Activated CD4-positive, alpha-beta T cell treated with anti-CD3 and anti-CD28 coated beads, Interleukin-2, amount 10 ng/mL, durations not matched to agents 24 days and 14 days (primary cell): ENCODE measurements at regions of chr9 and their contacts with region 1.

Region 1: DNA sequence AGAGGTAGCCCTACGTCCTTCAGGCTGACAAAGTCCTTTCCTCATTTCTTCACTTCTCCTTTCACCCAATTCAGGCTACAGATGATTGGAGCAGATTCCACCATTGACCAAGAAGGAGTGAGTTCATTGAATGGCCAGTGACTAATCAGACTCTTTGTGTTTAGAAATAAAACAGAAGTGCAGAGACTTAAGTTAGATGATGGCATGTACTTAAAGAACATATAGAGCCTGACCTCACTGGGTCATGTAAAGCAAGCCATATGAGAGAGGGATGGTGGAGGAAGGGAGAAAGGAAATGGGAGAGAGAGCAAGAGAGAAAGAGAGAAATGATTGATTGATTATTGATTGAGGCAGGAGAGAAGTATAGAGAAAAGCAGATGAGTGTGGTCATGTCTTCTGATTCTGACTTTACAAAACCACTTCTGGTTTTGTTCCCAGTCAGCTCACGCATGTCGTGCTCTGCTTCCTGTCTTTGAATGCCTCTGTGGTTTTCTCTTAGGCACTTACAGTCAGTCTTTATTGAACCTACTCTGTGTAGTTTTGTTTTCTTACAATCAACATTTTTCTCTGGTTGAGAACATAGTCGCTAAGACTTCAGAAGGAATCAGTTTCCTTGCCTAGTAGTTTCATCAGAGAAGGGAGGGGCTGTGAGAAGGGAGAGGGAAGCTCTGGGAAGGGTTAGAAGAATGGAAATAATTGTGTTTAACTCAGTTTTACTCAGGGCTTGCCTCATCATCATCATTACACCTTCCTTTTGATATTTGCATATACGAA is 149.2 kb upstream of the KLF9 start:
- DNase-seq: peak; percentile 90
- H3K4me3 Mint-ChIP-seq: peak overlapping the region; percentile 60
- H3K27ac Mint-ChIP-seq: peak overlapping the region; percentile 95
- H3K4me1 Mint-ChIP-seq: peaks cover 47% of the 10 kb centered on the region
- H3K27me3 Mint-ChIP-seq: no peaks in the 10 kb centered on the region

Region 2: DNA sequence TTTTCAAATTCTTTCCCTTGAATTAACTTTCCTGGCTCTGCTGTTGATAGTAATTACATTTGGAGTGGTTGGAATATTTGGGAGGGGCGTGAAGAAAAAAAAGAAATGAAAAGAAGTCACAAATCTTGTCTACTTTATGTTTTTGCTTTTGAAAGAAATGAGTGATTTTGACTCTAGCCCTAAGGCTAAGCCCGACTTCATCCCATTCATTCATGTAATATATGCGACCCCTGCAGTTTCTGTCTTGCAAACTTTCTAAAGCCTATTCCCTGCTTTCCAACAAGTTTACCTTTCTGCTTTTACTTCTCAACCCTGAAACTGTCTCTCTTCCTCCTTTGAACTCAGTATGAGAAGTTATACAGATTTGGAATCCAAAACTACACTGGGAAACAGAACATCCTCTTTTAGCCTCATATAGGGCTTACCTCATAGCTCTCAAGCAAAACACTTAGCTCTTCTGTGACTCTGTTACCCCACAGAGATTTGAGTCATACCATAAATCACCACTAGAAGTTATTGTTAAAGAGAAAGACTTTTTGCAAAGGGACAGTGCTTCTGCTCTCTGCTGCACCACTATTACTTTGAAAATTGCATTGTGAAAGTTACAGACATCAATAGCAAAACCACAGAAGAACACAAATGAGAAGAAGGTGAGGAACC is 741.4 kb before region 1 on chr9:
- intact Hi-C with region 1: loop called (anchors 10 kb)
- DNase-seq: peak; percentile 54
- H3K4me3 Mint-ChIP-seq: no peak overlapping the region
- H3K27ac Mint-ChIP-seq: no peak overlapping the region
- H3K4me1 Mint-ChIP-seq: peaks cover 40% of the 10 kb centered on the region
- H3K27me3 Mint-ChIP-seq: peaks cover 17% of the 10 kb centered on the region

Region 3: DNA sequence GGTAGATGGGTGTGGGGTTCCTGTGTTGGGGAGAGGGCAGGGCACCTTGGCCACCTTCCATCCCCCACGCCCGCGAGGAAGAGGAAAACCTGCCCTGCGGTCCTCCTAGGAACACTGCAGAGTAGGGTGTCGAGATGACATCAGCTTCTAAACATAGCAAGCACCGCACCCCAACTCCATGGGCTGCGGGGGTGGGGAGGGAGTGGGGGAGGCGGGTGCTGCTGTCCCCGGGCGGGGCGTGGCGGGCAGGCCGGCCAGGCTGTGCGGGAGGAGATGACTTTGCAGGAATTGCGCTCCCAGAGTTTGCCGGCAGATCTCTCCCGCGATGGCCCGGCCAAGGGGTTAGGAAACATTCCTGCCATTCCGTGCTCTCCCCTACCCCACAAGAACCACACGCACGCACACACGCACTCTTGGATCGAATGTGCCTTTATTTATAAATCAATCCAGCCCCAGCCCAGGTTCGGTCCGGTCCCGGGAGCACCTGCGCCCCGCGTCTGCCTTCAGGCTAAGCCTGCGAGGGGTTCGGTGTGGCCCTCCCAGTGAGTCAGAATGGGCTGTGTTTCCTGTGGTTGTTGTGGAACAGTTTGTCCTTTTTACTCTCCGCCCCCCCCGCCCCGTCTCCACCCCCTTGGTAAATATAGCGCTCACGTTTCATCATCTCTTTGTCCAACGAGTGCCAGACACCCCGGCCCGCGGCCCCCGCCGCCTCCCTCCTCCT is 143.9 kb before region 1 on chr9:
- intact Hi-C with region 1: loop called (anchors 1 kb)
- DNase-seq: peak; percentile 93
- H3K4me3 Mint-ChIP-seq: peak overlapping the region; percentile 89
- H3K27ac Mint-ChIP-seq: peak overlapping the region; percentile 97
- H3K4me1 Mint-ChIP-seq: peaks cover 46% of the 10 kb centered on the region
- H3K27me3 Mint-ChIP-seq: no peaks in the 10 kb centered on the region

Region 4: DNA sequence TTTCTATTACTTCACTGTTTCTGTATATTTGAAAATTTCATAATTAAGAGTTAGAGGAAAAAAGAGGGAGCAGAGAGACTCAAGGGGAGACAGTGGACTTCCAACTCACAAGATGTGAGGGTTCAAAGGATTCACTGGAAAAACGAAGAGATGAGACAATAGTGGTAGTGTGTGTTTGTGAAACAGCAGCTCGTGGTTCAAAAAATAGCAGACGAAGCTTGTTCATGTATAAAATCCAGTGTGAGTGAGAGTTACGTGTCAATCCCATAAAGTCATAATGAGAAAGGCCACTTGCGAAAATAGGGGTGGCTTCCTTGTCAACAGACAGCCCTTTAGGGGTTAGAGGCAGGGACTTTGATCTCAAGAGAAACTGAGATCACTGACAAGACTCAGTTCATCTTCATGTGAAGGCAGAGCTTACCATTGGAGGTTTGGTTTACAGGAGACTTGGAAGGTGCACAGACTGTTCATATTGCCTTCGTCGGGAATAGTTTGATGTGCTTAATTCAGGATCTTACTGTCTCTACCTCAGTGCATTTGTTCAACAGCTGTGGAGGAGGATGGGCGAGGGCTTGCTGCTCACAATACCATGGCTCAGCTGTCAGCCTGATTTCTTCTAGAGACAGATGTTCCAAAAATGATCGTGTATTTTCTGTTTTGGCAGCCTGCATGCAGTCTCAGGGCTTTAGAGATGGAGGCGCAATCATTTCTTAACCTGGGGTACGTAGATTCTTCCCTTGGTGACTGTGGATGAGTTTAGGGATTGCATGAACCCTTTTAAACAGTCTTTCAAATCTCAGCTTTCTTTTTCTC is 43.5 kb before region 1 on chr9:
- intact Hi-C with region 1: loop called (anchors 1 kb)
- DNase-seq: peak; percentile 67
- H3K4me3 Mint-ChIP-seq: peak overlapping the region; percentile 69
- H3K27ac Mint-ChIP-seq: peak overlapping the region; percentile 85
- H3K4me1 Mint-ChIP-seq: peaks cover 28% of the 10 kb centered on the region
- H3K27me3 Mint-ChIP-seq: no peaks in the 10 kb centered on the region

Region 5: GRCh38 chr9:70534061-70534460 is 29.6 kb before region 1 on chr9:
- intact Hi-C with region 1: no loop called
- DNase-seq: no peak
- H3K4me3 Mint-ChIP-seq: no peak overlapping the region
- H3K27ac Mint-ChIP-seq: no peak overlapping the region
- H3K4me1 Mint-ChIP-seq: peaks cover 10% of the 10 kb centered on the region
- H3K27me3 Mint-ChIP-seq: no peaks in the 10 kb centered on the region

Region 6: GRCh38 chr9:70609542-70610286 is 46.1 kb after region 1 on chr9:
- intact Hi-C with region 1: no loop called
- DNase-seq: no peak
- H3K4me3 Mint-ChIP-seq: no peak overlapping the region
- H3K27ac Mint-ChIP-seq: no peak overlapping the region
- H3K4me1 Mint-ChIP-seq: no peaks in the 10 kb centered on the region
- H3K27me3 Mint-ChIP-seq: peaks cover 10% of the 10 kb centered on the region

Region 7: DNA sequence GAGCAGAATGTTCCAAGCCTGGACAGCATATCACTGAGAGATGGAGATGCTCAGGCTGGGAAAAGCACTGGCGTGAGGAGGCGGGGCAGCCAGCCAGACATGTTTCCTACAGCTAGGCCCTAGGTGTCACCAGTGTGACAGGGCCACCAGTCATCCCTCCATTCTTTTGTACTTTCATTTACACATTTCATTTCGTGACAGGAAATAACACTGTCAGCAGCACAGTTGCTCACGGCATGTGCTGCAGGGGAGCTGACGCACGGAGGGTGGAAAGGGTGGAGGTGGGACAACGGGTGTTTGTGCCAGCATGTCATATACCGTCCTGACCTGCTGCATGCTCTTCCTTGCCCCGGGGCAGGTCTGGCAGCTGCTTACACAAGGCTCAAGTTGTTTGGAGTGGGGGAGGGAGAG is 1219.5 kb after region 1 on chr9:
- intact Hi-C with region 1: loop called (anchors 10 kb)
- DNase-seq: peak; percentile 94
- H3K4me3 Mint-ChIP-seq: peak overlapping the region; percentile 80
- H3K27ac Mint-ChIP-seq: peak overlapping the region; percentile 95
- H3K4me1 Mint-ChIP-seq: peaks cover 43% of the 10 kb centered on the region
- H3K27me3 Mint-ChIP-seq: no peaks in the 10 kb centered on the region